ENCODE measurements at regions of chr6 and their contacts with region 1.

Region 1: GRCh38 chr6:131063028-131063763 is at the start of gene EPB41L2:
- DNase-seq: peak; percentile 55
- H3K4me3 ChIP-seq: peak within 1 kb of the TSS; percentile 92
- H3K27me3 ChIP-seq: no peaks in the 10 kb centered on the region
- CTCF ChIP-seq: peak; percentile 35; the same call in 1 of the 2 replicates
- polyA plus RNA-seq, gene EPB41L2: 24.5 and 31.2 TPM in 2 replicates

Region 2: DNA sequence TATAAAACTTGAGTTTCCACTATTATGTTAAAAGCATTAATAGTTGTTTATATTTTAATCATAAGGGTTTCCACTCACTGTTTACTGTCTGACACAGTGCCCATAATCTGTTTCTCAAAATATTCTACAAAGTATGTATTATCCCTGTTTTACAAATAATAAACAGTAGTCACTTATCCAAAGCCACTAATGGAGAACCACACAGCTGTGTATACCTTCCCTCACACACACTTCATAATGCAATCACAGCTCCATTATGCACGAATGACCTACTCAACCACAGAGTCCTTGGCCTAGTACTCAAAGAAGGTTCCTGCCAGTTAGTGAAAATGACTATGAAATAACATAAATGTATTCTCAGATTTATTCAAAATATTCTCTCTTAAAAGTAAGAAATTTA is 103.2 kb before region 1 on chr6:
- CTCF ChIA-PET with region 1: no interaction called
- POLR2A ChIA-PET with region 1: interaction called, 12 read pairs
- DNase-seq: no peak
- H3K4me3 ChIP-seq: no peak overlapping the region
- H3K27me3 ChIP-seq: no peaks in the 10 kb centered on the region
- CTCF ChIP-seq: no peak

Region 3: DNA sequence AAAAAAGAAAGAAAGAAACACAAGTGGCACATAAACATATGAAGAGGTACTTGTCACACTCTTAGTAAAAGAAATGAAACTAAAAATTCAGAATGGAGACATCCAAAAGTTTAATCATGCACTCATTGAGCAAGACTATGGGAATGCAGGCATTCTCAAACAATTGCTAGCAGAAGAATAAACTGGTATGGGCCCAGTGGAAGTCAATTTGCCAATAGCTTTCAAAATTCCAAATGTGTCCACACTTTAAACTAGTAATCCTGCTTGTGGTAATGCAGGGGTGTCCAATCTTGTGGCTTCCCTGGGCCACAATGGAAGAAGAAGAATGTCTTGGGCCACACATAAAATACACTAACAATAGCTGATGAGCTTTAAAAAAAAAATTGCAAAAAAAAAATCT is 97.5 kb before region 1 on chr6:
- CTCF ChIA-PET with region 1: no interaction called
- POLR2A ChIA-PET with region 1: interaction called, 10 read pairs
- DNase-seq: peak; percentile 45
- H3K4me3 ChIP-seq: no peak overlapping the region
- H3K27me3 ChIP-seq: no peaks in the 10 kb centered on the region
- CTCF ChIP-seq: no peak

Measured in BJ (cell line).